Activated CD8-positive, alpha-beta T cell treated with anti-CD3 and anti-CD28 coated beads for 36 hours (primary cell): ENCODE measurements at regions of chr1 and their contacts with region 1.

Region 1: DNA sequence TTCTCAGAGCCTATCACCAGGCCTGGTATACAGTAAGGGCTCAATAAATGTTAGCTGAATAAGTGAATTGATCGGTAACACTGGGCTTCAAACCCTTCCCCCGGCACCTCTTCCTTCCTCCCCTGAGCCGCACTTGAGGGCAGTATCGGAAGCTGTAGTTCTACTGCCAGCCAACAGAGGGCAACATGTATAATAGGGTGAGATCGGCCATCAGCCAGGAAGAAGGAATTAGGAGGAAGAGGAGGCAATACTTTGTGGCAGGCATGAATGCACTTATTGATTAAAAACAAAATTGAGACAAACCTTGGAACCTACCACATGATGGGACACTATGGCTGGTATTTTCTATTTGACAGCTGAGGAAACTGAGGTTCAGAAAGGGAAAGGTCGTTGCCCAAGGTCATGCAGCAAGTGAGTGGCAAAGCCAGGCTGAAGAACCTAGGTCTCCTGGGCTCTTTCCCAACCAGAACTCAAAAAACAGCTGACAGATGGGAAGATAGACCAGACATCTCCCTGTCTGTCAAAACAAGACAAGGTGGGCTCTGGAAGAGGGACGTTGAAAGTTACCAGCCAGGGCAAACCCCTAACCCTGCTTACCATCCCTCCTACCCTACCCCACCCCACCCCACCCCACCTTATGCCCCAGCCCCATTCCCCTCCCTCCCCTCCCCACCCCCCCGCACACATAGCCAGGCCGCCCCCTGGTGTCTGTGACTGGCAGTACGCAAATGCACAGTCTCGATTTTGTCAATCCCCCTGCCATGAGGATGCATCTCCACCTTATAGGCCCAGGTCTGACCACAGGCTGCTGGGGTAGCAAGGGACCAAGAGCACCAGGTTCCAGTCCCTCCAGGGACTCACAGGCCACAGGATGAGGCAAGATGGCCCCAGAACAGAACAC is 107.3 kb upstream of the RUNX3 start:
- DNase-seq: peak; percentile 72
- ATAC-seq: peak; percentile 45
- H3K4me3 Mint-ChIP-seq: peak overlapping the region; percentile 22
- H3K27ac Mint-ChIP-seq: peak overlapping the region; percentile 65
- H3K4me1 Mint-ChIP-seq: peaks cover 59% of the 10 kb centered on the region
- H3K27me3 Mint-ChIP-seq: no peaks in the 10 kb centered on the region
- CTCF ChIP-seq: peak; percentile 85

Region 2: GRCh38 chr1:24930204-24931145 is 106.9 kb before region 1 on chr1 and contains the start of gene RUNX3:
- CTCF ChIA-PET with region 1: interaction called, 53 read pairs
- POLR2A ChIA-PET with region 1: interaction called, 8 read pairs
- intact Hi-C with region 1: loop called (anchors 10 kb)
- DNase-seq: peak; percentile 92
- ATAC-seq: peak; percentile 81
- H3K4me3 Mint-ChIP-seq: peak within 1 kb of the TSS; percentile 96
- H3K27ac Mint-ChIP-seq: peak within 1 kb of the TSS; percentile 90
- H3K4me1 Mint-ChIP-seq: peaks cover 60% of the 10 kb centered on the region
- H3K27me3 Mint-ChIP-seq: no peaks in the 10 kb centered on the region
- CTCF ChIP-seq: no peak
- total RNA-seq, gene RUNX3: 180 to 183 TPM

Region 3: GRCh38 chr1:24964811-24965570 is 72.4 kb before region 1 on chr1:
- CTCF ChIA-PET with region 1: interaction called, 169 read pairs
- POLR2A ChIA-PET with region 1: interaction called, 159 read pairs
- intact Hi-C with region 1: loop called (anchors 2 kb)
- DNase-seq: peak; percentile 99
- ATAC-seq: peak; percentile 69
- H3K4me3 Mint-ChIP-seq: peak overlapping the region; percentile 99
- H3K27ac Mint-ChIP-seq: peak overlapping the region; percentile 98
- H3K4me1 Mint-ChIP-seq: peaks cover 63% of the 10 kb centered on the region
- H3K27me3 Mint-ChIP-seq: no peaks in the 10 kb centered on the region
- CTCF ChIP-seq: no peak

Region 4: DNA sequence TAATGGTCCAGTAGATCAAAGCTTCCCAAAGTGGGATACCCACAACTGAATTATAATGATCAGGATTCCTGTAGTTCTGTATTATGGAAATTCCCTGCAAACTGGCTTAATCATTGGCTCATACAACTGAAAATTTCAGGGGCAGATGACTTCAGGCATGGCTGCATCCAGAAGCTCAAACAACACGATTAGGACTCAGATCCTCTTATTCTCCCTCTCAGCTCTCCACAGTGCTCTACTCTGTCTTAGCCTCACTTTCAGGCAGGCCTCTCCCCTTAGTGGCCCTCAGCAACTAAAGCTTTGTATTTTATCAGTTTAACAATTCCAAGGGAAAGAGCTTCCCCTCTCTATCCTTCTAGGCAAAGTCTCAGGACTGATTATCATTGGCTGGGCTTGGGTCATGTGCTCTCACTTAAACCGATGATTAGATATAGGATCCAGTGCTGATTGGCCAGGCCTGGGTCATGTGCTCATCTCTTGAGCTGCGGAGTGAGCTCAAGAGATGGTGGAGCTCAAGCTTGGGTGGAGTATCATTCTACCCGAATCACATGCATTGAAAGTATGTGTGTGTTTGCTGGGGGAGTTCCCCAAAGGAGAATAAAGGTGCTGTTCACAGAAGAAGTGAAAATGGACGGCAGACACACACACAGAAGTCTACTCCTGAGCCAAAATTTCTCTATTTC is 49.4 kb before region 1 on chr1:
- CTCF ChIA-PET with region 1: interaction called, 28 read pairs
- POLR2A ChIA-PET with region 1: interaction called, 22 read pairs
- intact Hi-C with region 1: loop called (anchors 5 kb)
- DNase-seq: peak; percentile 83
- ATAC-seq: peak; percentile 76
- H3K4me3 Mint-ChIP-seq: no peak overlapping the region
- H3K27ac Mint-ChIP-seq: peak overlapping the region; percentile 82
- H3K4me1 Mint-ChIP-seq: peaks cover 95% of the 10 kb centered on the region
- H3K27me3 Mint-ChIP-seq: no peaks in the 10 kb centered on the region
- CTCF ChIP-seq: no peak

Region 5: DNA sequence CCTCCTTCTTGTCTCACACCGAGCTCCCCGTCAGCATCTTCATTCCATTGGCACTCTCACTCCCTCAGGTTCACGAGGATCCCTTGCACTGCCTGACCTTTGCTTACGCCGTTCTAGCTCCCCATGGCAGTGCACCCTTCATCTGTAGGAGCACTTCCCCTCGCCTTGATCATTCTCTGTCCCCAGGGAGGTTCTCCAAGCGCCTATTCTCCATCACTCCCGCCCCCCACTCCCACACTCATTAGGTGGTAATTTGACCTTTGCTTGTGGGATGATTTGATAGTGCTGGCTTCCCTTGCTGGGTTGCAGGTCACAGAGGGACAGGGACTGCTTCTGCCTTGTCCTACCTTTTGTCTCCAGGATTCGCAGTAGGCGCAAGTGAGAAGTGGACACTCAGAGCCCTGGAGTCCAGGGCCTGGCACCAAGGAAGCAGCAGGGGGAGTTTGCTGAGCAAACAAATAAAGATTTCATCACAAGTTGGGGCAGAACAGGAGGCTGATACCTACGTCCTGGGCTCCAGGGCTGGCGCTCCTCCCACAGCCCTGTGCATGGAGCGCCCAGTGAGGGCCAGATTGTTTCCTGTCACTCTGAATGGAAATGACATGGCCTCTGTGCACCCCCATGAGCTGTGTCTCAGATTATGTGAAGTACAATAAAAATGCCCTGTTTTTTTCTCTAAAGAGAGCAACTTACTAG is 25.3 kb before region 1 on chr1:
- CTCF ChIA-PET with region 1: interaction called, 23 read pairs
- POLR2A ChIA-PET with region 1: interaction called, 4 read pairs
- intact Hi-C with region 1: no loop called
- DNase-seq: peak; percentile 74
- ATAC-seq: peak; percentile 79
- H3K4me3 Mint-ChIP-seq: no peak overlapping the region
- H3K27ac Mint-ChIP-seq: peak overlapping the region; percentile 86
- H3K4me1 Mint-ChIP-seq: peaks cover 68% of the 10 kb centered on the region
- H3K27me3 Mint-ChIP-seq: no peaks in the 10 kb centered on the region
- CTCF ChIP-seq: no peak

Region 6: DNA sequence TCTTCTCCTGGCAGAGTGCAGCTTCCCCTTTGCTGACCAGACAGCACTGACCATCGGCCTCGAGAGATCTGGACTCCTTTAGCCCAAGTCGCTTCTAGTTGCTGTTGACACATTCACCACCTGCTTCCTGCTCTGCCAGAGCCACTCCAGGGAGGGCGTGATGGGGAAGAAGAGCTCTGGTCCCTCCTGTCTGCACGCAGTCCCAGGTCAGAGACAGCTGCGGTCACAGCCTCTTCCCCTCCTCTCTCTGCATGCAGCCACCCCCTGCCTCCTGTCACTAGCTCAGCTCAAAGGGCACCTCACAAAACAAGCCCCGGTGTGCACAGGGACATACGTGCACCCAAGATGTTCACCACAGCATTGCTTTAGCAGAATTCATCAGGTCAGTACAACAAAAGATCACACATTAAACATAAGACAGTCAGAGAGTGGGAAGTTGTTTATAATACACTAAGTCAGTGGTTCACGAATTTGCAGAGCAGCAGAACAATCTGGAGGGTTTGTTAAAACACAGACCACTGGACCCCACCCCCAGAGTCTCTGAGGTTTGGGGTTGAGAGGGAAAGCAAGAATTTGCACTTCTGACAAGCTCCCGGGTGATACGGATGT is 62.0 kb after region 1 on chr1:
- CTCF ChIA-PET with region 1: interaction called, 49 read pairs
- POLR2A ChIA-PET with region 1: interaction called, 4 read pairs
- intact Hi-C with region 1: loop called (anchors 5 kb)
- DNase-seq: peak; percentile 87
- ATAC-seq: peak; percentile 74
- H3K4me3 Mint-ChIP-seq: peak overlapping the region; percentile 42
- H3K27ac Mint-ChIP-seq: peak overlapping the region; percentile 76
- H3K4me1 Mint-ChIP-seq: peaks cover 73% of the 10 kb centered on the region
- H3K27me3 Mint-ChIP-seq: no peaks in the 10 kb centered on the region
- CTCF ChIP-seq: no peak